Activated T-helper 1 cell treated with anti-CD3 and anti-CD28 coated beads, Interleukin-12 subunit alpha, Interleukin-12 subunit beta, Interleukin-2, Interleukin-4 antibody, amounts not matched to agents 30 ng/mL and 10 ng/mL and 1 ng/mL, durations not matched to agents 14 hours and 24 hours and 36 hours (primary cell): ENCODE measurements at regions of chr13 and their contacts with region 1.

Region 1: DNA sequence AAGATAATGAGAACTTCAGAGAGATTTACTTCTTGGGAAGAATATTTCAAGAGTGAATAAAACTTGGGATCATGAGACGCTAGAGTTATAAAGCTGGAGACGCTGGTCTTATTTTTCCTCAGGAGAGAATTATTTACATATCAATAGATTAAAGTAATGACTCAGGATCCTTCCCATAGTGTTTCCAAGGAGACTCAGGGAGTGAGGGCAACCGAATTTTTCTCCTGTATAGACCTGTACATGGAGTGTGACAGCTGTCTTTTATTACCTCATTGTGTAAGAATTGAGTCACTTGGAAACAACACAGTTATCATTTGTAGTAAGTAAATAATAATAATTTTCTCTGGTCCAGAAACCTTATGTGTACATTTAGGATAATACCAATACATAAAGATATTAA is 1905.5 kb downstream of the OLFM4 start:
- DNase-seq: no peak
- H3K4me3 Mint-ChIP-seq: no peak overlapping the region
- H3K27ac Mint-ChIP-seq: no peak overlapping the region
- H3K4me1 Mint-ChIP-seq: no peaks in the 10 kb centered on the region
- H3K27me3 Mint-ChIP-seq: no peaks in the 10 kb centered on the region

Region 2: GRCh38 chr13:54950546-54950945 is 16.4 kb after region 1 on chr13:
- intact Hi-C with region 1: no loop called
- DNase-seq: no peak
- H3K4me3 Mint-ChIP-seq: no peak overlapping the region
- H3K27ac Mint-ChIP-seq: no peak overlapping the region
- H3K4me1 Mint-ChIP-seq: no peaks in the 10 kb centered on the region
- H3K27me3 Mint-ChIP-seq: no peaks in the 10 kb centered on the region

Region 3: GRCh38 chr13:54965881-54966280 is 31.8 kb after region 1 on chr13:
- intact Hi-C with region 1: loop called (anchors 1 kb)
- DNase-seq: no peak
- H3K4me3 Mint-ChIP-seq: no peak overlapping the region
- H3K27ac Mint-ChIP-seq: no peak overlapping the region
- H3K4me1 Mint-ChIP-seq: no peaks in the 10 kb centered on the region
- H3K27me3 Mint-ChIP-seq: no peaks in the 10 kb centered on the region